Activated naive CD4-positive, alpha-beta T cell treated with anti-CD3 and anti-CD28 coated beads for 36 hours (primary cell): ENCODE measurements at regions of chr1 and their contacts with region 1.

Region 1: GRCh38 chr1:103461161-103462105 is 64.1 kb upstream of the RNPC3 start:
- DNase-seq: no peak
- H3K4me3 Mint-ChIP-seq: no peak overlapping the region
- H3K27ac Mint-ChIP-seq: no peak overlapping the region
- H3K4me1 Mint-ChIP-seq: no peaks in the 10 kb centered on the region
- H3K27me3 Mint-ChIP-seq: no peaks in the 10 kb centered on the region

Region 2: GRCh38 chr1:103106426-103107341 is 354.7 kb before region 1 on chr1:
- CTCF ChIA-PET with region 1: interaction called, 11 read pairs
- intact Hi-C with region 1: loop called (anchors 1 kb)
- DNase-seq: no peak
- H3K4me3 Mint-ChIP-seq: no peak overlapping the region
- H3K27ac Mint-ChIP-seq: no peak overlapping the region
- H3K4me1 Mint-ChIP-seq: peaks cover 9% of the 10 kb centered on the region
- H3K27me3 Mint-ChIP-seq: peaks cover 30% of the 10 kb centered on the region

Region 3: DNA sequence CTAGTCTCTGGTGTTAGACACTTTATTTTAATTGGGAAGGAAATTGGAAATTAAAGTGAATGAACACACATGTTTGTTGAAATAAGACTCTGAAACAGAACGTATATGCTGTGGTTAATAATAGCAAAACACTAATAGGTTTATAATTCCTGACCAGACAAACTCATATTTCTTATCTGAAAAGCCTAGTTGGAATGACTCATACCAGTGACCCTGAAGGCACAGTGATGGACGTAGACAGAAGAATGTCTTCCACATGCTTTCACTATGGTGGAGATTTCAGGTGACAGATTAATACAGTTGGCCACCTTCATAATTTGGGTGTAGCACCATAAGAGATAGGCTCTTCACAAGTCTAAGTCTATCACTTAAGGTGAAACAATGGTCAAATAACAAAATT is 270.1 kb before region 1 on chr1:
- CTCF ChIA-PET with region 1: no interaction called
- intact Hi-C with region 1: no loop called
- DNase-seq: no peak
- H3K4me3 Mint-ChIP-seq: no peak overlapping the region
- H3K27ac Mint-ChIP-seq: no peak overlapping the region
- H3K4me1 Mint-ChIP-seq: no peaks in the 10 kb centered on the region
- H3K27me3 Mint-ChIP-seq: no peaks in the 10 kb centered on the region

Region 4: GRCh38 chr1:103448560-103448959 is 12.9 kb before region 1 on chr1:
- CTCF ChIA-PET with region 1: interaction called, 10 read pairs
- intact Hi-C with region 1: no loop called
- DNase-seq: no peak
- H3K4me3 Mint-ChIP-seq: no peak overlapping the region
- H3K27ac Mint-ChIP-seq: no peak overlapping the region
- H3K4me1 Mint-ChIP-seq: peaks cover 12% of the 10 kb centered on the region
- H3K27me3 Mint-ChIP-seq: no peaks in the 10 kb centered on the region